ENCODE measurements at regions of chr12 and their contacts with region 1.

Region 1: GRCh38 chr12:2691006-2691344 is 103.8 kb upstream of the FKBP4 start:
- DNase-seq: peak; percentile 76
- H3K4me3 Mint-ChIP-seq: peak overlapping the region; percentile 81
- H3K27ac Mint-ChIP-seq: peak overlapping the region; percentile 84
- H3K4me1 Mint-ChIP-seq: peaks cover 19% of the 10 kb centered on the region
- H3K27me3 Mint-ChIP-seq: peaks cover 6% of the 10 kb centered on the region

Region 2: GRCh38 chr12:2239381-2239871 is 451.5 kb before region 1 on chr12:
- CTCF ChIA-PET with region 1: no interaction called
- POLR2A ChIA-PET with region 1: no interaction called
- intact Hi-C with region 1: no loop called
- DNase-seq: no peak
- H3K4me3 Mint-ChIP-seq: no peak overlapping the region
- H3K27ac Mint-ChIP-seq: no peak overlapping the region
- H3K4me1 Mint-ChIP-seq: no peaks in the 10 kb centered on the region
- H3K27me3 Mint-ChIP-seq: peaks cover 10% of the 10 kb centered on the region

Region 3: GRCh38 chr12:2739817-2740641 is 49.1 kb after region 1 on chr12:
- CTCF ChIA-PET with region 1: no interaction called
- POLR2A ChIA-PET with region 1: no interaction called
- intact Hi-C with region 1: no loop called
- DNase-seq: no peak
- H3K4me3 Mint-ChIP-seq: no peak overlapping the region
- H3K27ac Mint-ChIP-seq: no peak overlapping the region
- H3K4me1 Mint-ChIP-seq: no peaks in the 10 kb centered on the region
- H3K27me3 Mint-ChIP-seq: peaks cover 6% of the 10 kb centered on the region

Region 4: DNA sequence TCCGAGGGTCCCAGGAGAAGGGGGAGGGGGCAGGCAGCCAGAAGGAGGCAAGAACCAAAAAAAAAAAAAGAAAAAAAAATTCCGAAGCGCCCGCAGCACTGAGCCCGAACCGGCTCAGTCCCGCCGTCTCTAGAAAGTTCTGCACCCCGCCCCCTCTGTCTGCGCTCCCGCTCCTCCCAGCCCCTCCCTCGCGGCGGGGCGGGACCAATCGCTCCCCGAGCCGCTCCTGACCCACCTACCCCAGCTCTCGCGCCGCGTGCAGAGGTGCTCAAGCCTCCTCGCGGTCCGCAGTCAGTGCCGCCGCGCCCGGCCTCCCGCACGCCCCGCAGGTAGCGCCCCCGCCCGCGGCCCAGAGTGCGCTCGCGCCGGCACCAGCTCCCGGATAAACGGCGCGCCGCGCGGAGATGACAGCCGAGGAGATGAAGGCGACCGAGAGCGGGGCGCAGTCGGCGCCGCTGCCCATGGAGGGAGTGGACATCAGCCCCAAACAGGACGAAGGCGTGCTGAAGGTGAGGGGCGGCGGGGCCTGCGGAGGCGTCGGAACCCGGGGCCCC is 103.8 kb after region 1 on chr12 and contains the start of gene FKBP4:
- CTCF ChIA-PET with region 1: interaction called, 5 read pairs
- POLR2A ChIA-PET with region 1: interaction called, 13 read pairs
- intact Hi-C with region 1: loop called (anchors 1 kb)
- DNase-seq: peak; percentile 93
- H3K4me3 Mint-ChIP-seq: peak within 1 kb of the TSS; percentile 91
- H3K27ac Mint-ChIP-seq: peak within 1 kb of the TSS; percentile 23
- H3K4me1 Mint-ChIP-seq: peaks cover 22% of the 10 kb centered on the region
- H3K27me3 Mint-ChIP-seq: no peaks in the 10 kb centered on the region
- total RNA-seq, gene FKBP4: 144 to 153 TPM